ENCODE measurements at regions of chr4 and their contacts with region 1.

Region 1: DNA sequence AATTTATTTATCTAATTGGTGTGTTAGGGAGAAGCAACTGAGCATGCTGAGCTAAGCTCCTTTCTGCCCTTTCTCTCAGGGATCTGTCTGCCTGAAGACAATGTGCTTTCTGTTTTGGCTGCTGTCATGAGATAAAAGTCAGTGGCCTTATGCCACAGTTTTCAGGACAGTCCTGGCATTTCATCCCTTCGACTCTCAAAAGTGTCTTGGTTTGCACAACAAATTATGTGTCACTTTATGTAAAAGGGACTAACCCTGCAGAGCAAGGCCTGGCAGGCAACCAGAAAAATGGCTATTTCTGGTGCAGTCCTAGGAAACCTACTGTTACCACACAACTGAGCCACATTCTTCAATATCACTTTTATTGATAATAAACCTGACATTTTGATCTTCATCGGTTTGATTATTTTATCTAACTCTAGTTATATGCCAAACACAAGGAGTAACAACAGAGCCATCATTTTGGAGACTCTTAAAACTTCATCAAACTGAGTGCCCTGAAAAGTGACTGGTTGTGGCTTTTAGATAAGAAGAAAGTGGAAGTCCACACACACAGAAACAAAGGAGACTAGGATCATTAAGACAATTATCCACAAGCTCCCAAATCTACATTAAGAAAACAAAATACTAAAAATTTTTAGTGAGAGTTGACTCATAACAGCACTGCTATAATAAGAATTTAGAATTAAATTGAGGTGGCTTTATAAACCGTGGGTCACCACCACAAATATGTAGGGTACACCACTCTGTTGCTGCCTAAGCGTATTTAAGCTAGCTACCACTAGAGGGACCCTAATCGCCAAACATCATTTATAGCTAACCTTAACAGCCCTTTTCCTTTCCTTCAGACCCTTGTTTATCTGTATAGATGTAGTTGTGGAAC is 95.9 kb upstream of the PTPN13 start:
- DNase-seq: no peak
- H3K4me3 ChIP-seq: no peak overlapping the region
- CTCF ChIP-seq: peak; percentile 75

Region 2: DNA sequence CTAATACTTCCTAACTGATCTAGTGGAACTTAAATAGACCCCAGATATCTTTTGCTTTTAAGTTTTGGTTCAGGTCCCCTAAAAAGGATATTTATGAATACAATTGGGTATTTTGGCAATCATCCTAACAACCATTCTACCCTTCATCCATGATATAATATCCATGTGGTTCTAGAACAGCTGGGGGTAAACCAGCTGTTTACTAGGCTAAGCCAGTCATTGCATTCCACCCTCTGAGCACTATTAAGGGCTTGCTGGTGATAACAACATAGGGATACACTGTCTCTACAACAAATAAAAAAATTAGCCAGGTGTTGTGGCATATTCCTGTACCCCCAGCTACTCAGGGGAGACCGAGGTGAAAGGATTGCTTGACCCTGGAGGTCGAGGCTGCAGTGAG is 83.5 kb before region 1 on chr4:
- CTCF ChIA-PET with region 1: no interaction called
- POLR2A ChIA-PET with region 1: no interaction called
- DNase-seq: no peak
- H3K4me3 ChIP-seq: no peak overlapping the region
- CTCF ChIP-seq: no peak

Region 3: GRCh38 chr4:86482311-86483172 is 15.7 kb before region 1 on chr4:
- CTCF ChIA-PET with region 1: interaction called, 37 read pairs
- POLR2A ChIA-PET with region 1: no interaction called
- DNase-seq: no peak
- H3K4me3 ChIP-seq: no peak overlapping the region
- CTCF ChIP-seq: peak; percentile 17

Region 4: GRCh38 chr4:86508436-86508835 is 10.2 kb after region 1 on chr4:
- CTCF ChIA-PET with region 1: interaction called, 110 read pairs
- POLR2A ChIA-PET with region 1: no interaction called
- DNase-seq: peak; percentile 59
- H3K4me3 ChIP-seq: peak overlapping the region; percentile 7
- CTCF ChIP-seq: no peak

Region 5: GRCh38 chr4:86593688-86594558 is 95.7 kb after region 1 on chr4 and contains the start of gene PTPN13:
- CTCF ChIA-PET with region 1: interaction called, 41 read pairs
- POLR2A ChIA-PET with region 1: interaction called, 5 read pairs
- DNase-seq: peak; percentile 89
- H3K4me3 ChIP-seq: peak within 1 kb of the TSS; percentile 88
- CTCF ChIP-seq: no peak

Region 6: DNA sequence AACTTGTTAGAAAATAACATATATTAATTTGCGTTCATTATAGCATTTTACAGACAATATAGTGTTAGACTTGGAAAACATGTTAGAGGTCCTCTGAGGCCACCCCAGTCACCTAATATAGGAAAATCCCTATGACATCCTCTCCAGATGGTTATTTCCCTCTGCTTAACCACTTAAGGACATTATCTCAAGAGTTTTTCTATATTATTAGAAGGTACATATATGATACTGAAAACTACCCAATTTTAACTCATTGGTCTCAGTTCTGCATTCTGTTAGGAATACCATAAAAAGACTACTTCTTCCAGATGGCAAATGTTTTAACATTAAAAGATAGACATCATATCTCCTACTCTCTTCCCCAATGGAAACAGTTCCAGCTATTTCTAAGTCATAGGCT is 117.3 kb after region 1 on chr4:
- CTCF ChIA-PET with region 1: no interaction called
- POLR2A ChIA-PET with region 1: no interaction called
- DNase-seq: no peak
- H3K4me3 ChIP-seq: no peak overlapping the region
- CTCF ChIP-seq: no peak

Region 7: DNA sequence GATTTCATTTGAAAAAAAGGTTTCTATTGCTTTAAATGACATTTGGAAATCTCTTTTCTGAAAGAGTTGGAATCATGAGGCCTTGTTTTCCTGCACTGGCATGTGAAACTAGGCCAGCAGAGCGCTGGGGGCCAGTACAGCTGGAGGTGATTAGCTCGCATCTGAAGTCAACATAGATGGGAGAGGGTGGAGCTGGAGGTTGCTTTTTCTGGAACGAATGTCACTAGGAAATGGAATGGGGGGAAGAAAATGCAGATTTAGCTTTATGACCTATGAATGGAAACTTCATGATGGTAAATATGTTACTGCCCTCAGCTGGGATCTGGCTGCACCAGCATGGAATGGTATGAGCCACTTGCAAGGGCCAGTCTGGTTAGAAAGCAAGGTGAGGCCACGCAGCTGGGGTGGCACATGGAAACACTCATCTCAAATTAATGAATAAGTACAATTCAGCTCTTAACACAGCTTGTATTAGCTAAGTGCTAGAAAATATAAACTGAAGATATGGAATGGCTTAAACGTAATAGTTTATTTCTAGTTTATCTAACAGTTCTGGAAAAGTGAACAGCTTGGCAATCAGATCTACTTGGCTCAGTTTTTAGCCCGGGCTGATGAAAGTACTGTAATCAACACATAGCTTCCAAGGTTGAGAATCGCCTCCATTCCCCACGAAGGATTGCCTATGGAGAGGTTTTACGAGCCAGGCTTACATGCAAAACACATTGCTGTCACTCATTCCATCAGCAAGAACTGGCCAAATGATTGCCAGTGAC is 318.5 kb after region 1 on chr4:
- CTCF ChIA-PET with region 1: interaction called, 11 read pairs
- POLR2A ChIA-PET with region 1: no interaction called
- DNase-seq: no peak
- H3K4me3 ChIP-seq: no peak overlapping the region
- CTCF ChIP-seq: no peak

Region 8: DNA sequence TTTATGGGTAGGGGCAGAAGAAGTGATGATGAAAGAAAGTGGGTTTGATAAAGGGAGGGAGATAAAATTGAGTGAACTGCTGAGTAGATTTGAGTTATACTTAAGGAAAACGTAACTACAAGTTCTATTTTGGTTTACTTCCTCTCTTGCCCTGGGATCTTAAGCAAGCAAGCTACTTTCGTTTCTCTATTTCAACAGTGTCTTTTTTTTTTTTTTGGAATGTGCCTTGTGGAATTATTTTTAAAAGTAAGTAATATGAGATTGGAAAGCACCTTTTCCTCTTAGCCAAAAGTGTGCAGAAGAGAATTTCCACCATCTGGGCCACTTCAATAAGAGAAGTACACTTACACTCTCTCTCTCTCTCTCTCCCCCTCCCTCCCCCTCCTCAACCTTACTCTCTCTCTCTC is 410.0 kb after region 1 on chr4:
- CTCF ChIA-PET with region 1: interaction called, 180 read pairs
- POLR2A ChIA-PET with region 1: no interaction called
- DNase-seq: no peak
- H3K4me3 ChIP-seq: no peak overlapping the region
- CTCF ChIP-seq: no peak

Region 9: DNA sequence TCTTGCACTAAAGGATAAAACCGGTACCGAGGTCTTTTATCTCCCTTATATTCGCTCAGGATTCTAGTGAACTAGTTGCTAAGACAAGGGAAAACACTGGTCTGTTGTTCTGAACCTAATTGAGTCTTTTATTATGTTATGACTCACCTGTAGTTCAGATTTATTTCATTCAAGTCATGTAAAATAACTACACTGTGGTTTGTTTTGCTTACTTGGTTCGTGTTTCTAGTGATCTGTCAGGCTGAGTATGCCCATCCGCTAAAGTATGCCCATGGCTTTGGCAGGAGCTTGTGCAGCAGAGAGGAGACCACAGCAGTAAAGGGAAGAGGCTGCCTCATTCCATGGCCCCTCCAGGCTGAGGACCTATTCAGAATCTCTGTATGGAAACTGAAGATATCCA is 562.7 kb after region 1 on chr4:
- CTCF ChIA-PET with region 1: no interaction called
- POLR2A ChIA-PET with region 1: no interaction called
- DNase-seq: no peak
- H3K4me3 ChIP-seq: no peak overlapping the region
- CTCF ChIP-seq: no peak

Region 10: GRCh38 chr4:87093443-87094123 is 595.4 kb after region 1 on chr4:
- CTCF ChIA-PET with region 1: interaction called, 12 read pairs
- POLR2A ChIA-PET with region 1: no interaction called
- DNase-seq: no peak
- H3K4me3 ChIP-seq: no peak overlapping the region
- CTCF ChIP-seq: peak; percentile 46